ENCODE measurements at regions of chr1 and their contacts with region 1.

Region 1: GRCh38 chr1:115469703-115470476 is 131.8 kb upstream of the NGF start:
- DNase-seq: peak in 2 of 3 donors; percentile 64 to 74
- ATAC-seq: peak; percentile 53 to 73
- H3K4me3 ChIP-seq: no peak overlapping the region
- H3K27ac ChIP-seq: no peak overlapping the region
- H3K4me1 ChIP-seq: no peaks in the 10 kb centered on the region
- H3K27me3 ChIP-seq: no peaks in the 10 kb centered on the region

Region 2: GRCh38 chr1:115275212-115275611 is 194.7 kb before region 1 on chr1:
- intact Hi-C with region 1: loop called in 1 of 4 experiments (anchors 10 kb)
- DNase-seq: no peak
- ATAC-seq: no peak
- H3K4me3 ChIP-seq: no peak overlapping the region
- H3K27ac ChIP-seq: peak overlapping the region; percentile 13
- H3K4me1 ChIP-seq: no peaks in the 10 kb centered on the region
- H3K27me3 ChIP-seq: no peaks in the 10 kb centered on the region

Region 3: DNA sequence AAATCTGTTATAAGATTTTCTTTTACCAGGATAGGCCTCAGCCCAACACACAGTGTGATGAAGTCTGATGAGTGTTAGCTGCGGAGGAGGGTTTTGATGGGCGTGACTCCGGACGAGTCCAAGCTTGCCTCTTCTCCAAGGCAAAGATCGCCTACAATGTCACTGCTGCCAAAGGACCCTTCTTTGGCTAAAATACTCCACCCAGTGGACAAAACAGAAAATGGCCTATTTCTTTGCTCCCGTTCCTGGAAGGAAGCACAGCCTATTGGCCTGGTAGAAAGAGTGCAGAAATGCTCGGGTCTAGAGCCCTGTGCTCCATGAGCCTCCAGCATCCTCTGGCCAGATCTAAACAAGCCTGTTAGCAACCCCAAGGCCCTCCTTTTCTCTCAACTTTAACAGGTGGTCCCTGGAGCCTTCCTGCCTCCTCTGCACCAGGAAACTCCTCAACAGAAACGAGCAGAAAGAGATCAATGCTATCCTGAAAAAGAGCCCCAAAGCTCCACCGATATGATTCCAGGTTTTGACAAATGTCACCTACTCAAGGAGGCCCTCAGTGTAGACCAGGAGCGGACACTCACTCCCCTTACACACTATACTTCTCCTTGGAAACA is 302.1 kb after region 1 on chr1:
- intact Hi-C with region 1: no loop called
- DNase-seq: peak; percentile 70 to 78 (median 77)
- ATAC-seq: peak; percentile 89 to 91
- H3K4me3 ChIP-seq: peak overlapping the region; percentile 18
- H3K27ac ChIP-seq: peak overlapping the region; percentile 70
- H3K4me1 ChIP-seq: no peaks in the 10 kb centered on the region
- H3K27me3 ChIP-seq: no peaks in the 10 kb centered on the region